ENCODE measurements at regions of chr13 and their contacts with region 1.

Region 1: GRCh38 chr13:110220471-110220870 is 86.5 kb downstream of the COL4A1 start:
- DNase-seq: no peak
- H3K4me3 Mint-ChIP-seq: no peak overlapping the region
- H3K27ac Mint-ChIP-seq: no peak overlapping the region
- H3K4me1 Mint-ChIP-seq: no peaks in the 10 kb centered on the region
- H3K27me3 Mint-ChIP-seq: no peaks in the 10 kb centered on the region
- CTCF ChIP-seq: no peak

Region 2: DNA sequence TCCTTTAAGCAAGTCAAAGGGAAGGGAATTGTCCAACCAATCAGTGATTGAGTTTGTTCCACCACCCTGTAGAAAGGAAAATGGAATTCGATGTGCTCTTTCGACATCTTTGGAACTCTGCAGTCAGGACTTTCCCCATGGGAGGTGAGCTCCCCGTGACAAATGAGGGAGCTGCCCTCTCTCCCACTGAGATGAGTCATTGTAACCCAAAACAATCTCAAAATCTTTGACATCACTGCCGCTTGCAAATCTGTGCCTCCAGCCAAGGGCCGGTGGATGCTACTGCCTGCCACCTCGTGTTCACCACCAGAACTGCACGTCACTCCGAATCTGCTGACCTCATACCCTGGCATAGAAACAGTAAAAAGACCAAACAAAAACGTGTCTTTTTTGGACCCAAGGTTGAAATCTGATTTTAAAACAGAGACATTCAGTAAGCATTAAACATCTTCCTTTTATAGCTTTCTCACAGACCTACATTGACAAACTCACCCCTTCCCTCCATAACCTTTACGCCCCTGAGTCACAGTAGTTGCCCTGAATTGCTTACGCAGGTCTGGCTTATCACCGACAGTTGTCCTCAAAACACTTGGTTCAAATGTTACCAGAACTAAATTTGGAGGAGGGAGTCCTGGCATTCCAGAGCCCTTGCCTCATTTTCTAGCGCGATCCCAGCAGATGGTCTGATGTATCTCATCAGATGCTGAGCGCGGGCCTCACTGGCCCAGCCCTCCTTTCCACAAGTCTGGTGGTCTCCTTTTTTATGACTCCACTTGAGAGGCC is 191.9 kb after region 1 on chr13:
- CTCF ChIA-PET with region 1: no interaction called
- intact Hi-C with region 1: loop called (anchors 5 kb)
- DNase-seq: peak; percentile 63
- H3K4me3 Mint-ChIP-seq: no peak overlapping the region
- H3K27ac Mint-ChIP-seq: no peak overlapping the region
- H3K4me1 Mint-ChIP-seq: peaks cover 6% of the 10 kb centered on the region
- H3K27me3 Mint-ChIP-seq: no peaks in the 10 kb centered on the region
- CTCF ChIP-seq: peak; percentile 32

Measured in Calu3 (cell line).